Heart left ventricle (tissue), 16 donors: ENCODE measurements at regions of chr12 and their contacts with region 1.

Region 1: DNA sequence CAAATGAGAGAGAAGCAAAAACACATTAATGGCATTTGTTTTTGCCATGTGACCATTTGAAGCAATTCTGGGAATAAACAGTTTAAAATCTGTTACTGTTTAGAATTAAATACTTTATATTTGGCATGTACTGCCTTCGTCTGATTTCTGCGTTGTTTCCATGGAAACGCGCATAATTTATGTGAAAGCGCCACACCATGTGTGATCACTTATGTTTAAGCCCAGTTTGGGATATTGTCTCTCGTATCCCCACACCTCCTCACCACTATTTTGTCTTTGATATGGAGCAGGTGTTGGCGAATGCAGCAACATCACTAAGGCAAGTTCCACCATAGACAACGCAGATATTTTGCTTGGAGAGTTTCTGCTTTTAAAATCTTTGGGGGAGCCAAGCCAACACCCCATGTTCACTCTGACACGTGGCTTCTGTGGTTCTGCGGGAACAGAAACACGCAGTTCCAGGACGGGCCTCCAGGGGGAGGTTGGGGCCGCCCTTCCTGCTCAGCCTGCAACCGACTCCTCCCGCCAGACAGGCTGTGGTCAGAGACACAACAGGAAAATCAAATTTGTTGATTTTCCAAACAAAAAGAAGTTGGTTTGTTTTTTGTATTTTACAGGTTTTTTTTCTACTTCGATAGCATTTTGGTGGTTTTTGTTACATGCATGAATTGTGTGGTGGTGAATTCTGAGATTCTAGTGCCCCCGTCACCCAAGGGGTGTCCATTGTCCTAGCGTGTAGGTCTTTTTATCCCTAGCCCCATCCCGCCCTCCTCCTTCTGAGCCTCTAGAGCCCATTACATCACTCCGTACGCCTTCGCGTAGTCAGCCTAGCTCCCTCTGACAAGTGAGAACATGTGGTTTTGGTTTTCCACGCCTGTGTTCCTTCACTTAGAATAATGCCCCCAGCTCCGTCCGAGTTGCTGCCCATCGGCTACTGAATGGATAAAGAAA is 101.9 kb upstream of the SFSWAP start:
- DNase-seq: peak; percentile 67 to 84 (median 71)
- ATAC-seq: peak; percentile 71 to 95 (median 84)
- H3K4me3 ChIP-seq: peak overlapping the region in 3 of 12 donors; percentile 2 to 32 (median 17)
- H3K27ac ChIP-seq: no peak overlapping the region
- H3K4me1 ChIP-seq: peaks cover 0 to 40% (median 0%) of the 10 kb centered on the region in 12 donors
- H3K27me3 ChIP-seq: peaks cover 0 to 6% (median 0%) of the 10 kb centered on the region in 9 donors
- CTCF ChIP-seq: peak; percentile 69 to 94 (median 83)
- POLR2A ChIP-seq: no peak

Region 2: GRCh38 chr12:131808744-131809371 is 199.8 kb after region 1 on chr12:
- intact Hi-C with region 1: loop called in 1 of 10 experiments (anchors 10 kb)
- DNase-seq: peak in 4 of 5 donors; percentile 55 to 83 (median 68)
- ATAC-seq: peak in 3 of 4 donors; percentile 76 to 83 (median 79)
- H3K4me3 ChIP-seq: peak overlapping the region in 11 of 12 donors; percentile 11 to 64 (median 36)
- H3K27ac ChIP-seq: peak overlapping the region in 4 of 12 donors; percentile 8 to 85 (median 44)
- H3K4me1 ChIP-seq: peaks cover 0 to 10% (median 0%) of the 10 kb centered on the region in 12 donors
- H3K27me3 ChIP-seq: peaks cover 0 to 10% (median 0%) of the 10 kb centered on the region in 9 donors
- CTCF ChIP-seq: no peak
- POLR2A ChIP-seq: no peak